ENCODE measurements at regions of chr10 and their contacts with region 1.

Region 1: GRCh38 chr10:77173615-77174461 is 463.8 kb downstream of the KCNMA1 start:
- DNase-seq: peak; percentile 82
- ATAC-seq: peak; percentile 53
- H3K4me3 Mint-ChIP-seq: no peak overlapping the region
- H3K27ac Mint-ChIP-seq: no peak overlapping the region
- H3K4me1 Mint-ChIP-seq: no peaks in the 10 kb centered on the region
- H3K27me3 Mint-ChIP-seq: peaks cover 6% of the 10 kb centered on the region

Region 2: DNA sequence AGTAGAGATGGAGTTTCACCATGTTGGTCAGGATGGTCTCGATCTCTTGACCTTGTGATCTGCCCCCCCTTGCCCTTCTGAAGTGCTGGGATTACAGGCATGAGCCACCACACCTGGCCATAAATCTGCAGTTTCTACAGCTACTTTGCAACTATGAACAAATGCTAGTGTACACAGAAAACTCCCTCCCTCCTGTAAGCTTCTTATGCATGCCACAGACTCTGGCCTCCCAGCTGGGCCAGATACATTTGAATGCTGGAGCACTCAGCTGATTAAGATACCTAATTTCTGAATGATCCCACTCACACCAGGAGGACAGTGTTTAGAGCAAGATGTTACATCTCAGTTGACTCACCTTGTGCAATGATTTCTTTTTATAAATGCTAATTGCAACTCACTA is 22.4 kb before region 1 on chr10:
- CTCF ChIA-PET with region 1: no interaction called
- POLR2A ChIA-PET with region 1: no interaction called
- intact Hi-C with region 1: no loop called
- DNase-seq: no peak
- ATAC-seq: no peak
- H3K4me3 Mint-ChIP-seq: no peak overlapping the region
- H3K27ac Mint-ChIP-seq: no peak overlapping the region
- H3K4me1 Mint-ChIP-seq: no peaks in the 10 kb centered on the region
- H3K27me3 Mint-ChIP-seq: peaks cover 5% of the 10 kb centered on the region

Region 3: DNA sequence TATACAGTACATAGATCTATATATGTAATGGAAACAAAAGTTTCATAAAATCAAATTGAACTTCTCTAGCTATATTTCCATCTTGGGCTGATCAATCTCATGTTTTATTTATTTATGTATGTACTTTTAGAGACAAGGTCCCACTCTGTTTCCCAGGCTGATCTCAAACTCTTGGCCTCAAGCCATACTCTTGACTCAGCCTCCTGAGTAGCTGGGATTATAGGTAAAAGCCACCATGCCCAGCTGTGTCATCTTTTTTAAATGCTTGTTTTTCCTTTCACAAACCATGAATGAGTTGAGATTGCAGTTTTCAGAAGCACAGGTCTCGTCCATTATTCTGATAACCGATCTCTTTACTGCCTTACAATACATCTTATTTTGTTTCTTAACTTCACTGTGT is 62.9 kb after region 1 on chr10:
- CTCF ChIA-PET with region 1: no interaction called
- POLR2A ChIA-PET with region 1: no interaction called
- intact Hi-C with region 1: no loop called
- DNase-seq: no peak
- ATAC-seq: no peak
- H3K4me3 Mint-ChIP-seq: no peak overlapping the region
- H3K27ac Mint-ChIP-seq: no peak overlapping the region
- H3K4me1 Mint-ChIP-seq: no peaks in the 10 kb centered on the region
- H3K27me3 Mint-ChIP-seq: no peaks in the 10 kb centered on the region

Region 4: DNA sequence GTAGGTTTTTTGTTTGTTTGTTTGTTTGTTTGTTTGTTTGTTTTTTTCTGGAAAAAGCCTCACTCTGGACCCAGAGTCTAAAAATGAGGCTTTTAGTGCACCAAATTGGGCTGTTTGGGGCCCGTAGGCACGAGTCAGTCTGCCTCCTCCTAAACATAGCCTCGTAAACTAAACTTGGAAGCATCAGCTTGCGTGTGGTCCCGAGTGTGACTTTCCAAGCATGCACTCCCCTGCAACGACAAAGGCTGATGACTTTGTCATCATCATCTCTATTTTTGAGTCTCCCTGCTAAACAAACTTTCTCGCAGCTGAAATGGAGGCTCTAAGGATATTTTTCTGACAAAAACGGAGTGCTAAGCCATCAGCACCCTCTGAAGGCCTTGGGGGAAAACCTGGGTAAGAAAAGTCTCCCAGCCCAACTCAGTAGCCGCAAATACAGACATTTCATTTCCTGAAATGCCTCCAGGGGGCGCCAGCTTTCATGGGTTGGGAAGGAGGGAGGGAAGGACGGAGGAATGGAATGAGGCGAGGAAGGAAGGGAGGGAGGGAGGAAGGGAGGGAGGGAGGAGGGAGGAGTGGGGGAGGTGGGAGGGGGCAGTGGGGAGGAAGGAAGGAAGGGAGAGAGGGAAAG is 217.9 kb after region 1 on chr10:
- CTCF ChIA-PET with region 1: interaction called, 3 read pairs
- POLR2A ChIA-PET with region 1: no interaction called
- intact Hi-C with region 1: loop called in 1 of 2 experiments (anchors 10 kb)
- DNase-seq: peak; percentile 60
- ATAC-seq: no peak
- H3K4me3 Mint-ChIP-seq: no peak overlapping the region
- H3K27ac Mint-ChIP-seq: no peak overlapping the region
- H3K4me1 Mint-ChIP-seq: peaks cover 3% of the 10 kb centered on the region
- H3K27me3 Mint-ChIP-seq: peaks cover 3% of the 10 kb centered on the region

Region 5: DNA sequence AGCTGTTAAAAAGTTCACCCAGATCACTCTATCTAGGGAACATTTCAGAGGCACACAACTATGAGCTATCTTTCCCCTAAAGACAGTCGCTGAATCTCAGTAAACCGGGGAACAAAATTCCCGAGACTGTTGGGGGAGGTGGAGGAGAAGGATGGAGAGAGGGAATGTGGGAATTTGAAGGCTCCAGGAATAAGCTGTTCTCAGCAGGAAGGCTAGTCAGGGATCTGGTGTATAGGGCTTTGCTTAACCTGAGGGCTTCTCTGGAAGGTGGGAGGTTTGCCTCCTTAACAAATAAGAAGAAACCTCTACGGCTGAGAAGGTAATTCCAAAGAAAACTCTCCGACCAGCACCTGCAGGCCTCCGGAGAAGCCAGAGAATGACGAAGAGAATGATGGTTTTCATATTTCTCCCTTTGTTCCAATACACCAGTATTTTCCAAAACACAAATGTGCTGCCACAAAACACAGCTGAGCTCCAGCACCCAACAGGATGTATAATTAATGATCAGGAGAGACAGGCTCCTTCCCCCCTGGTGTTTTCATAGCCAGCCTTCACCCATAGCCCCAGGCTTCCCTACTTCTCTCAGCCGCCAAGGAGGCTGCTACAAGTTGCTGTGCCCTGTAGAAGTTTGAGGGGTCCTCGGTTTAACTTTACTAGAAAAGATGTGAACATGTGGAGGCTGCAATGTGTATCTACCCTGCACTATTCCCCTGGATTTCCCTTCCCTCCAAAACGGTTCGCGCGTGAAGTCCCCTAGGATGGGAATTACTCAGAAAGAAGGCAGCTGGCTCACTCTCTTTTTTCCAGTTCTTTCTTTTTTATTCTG is 461.8 kb after region 1 on chr10:
- CTCF ChIA-PET with region 1: interaction called, 83 read pairs
- POLR2A ChIA-PET with region 1: no interaction called
- intact Hi-C with region 1: no loop called
- DNase-seq: no peak
- ATAC-seq: no peak
- H3K4me3 Mint-ChIP-seq: no peak overlapping the region
- H3K27ac Mint-ChIP-seq: no peak overlapping the region
- H3K4me1 Mint-ChIP-seq: peaks cover 2% of the 10 kb centered on the region
- H3K27me3 Mint-ChIP-seq: peaks cover 49% of the 10 kb centered on the region

Measured in activated CD4-positive, alpha-beta T cell treated with anti-CD3 and anti-CD28 coated beads for 36 hours (primary cell).